ENCODE measurements at regions of chr12 and their contacts with region 1.

Region 1: DNA sequence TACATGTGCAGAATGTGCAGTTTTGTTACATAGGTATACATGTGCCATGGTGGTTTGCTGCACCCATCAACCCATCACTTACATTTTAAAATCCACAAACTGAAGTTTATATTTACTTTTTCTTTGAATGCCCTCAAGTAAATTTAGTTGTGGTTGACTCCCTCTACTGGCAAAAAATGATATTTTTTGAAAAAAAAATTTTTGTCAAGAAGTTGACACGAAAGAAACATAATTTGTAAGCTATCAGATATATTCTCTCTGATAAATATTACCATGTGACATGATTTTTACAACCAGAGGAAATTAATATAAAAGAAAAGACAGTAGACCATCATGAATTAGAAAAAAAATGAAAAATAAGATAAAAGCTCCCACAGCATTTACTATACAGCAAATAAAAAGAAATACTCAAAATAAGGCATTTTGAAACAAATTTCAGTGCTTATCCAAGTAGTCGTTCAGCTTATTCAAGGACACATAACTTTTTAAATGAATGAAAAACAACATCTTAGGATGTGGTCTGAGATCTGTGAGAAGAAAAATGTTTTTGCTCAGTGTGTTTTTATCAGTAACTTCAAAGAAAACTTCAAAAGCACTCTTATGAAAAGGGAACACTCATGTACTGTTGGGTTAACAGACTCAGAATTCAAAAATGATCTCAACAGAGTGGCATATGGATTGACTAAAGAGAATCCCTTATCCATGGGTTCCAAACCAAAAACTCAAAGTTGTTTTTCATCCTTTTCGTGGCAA is 30.0 kb upstream of the GRIP1 start:
- DNase-seq: no peak
- ATAC-seq: no peak
- H3K4me3 ChIP-seq: no peak overlapping the region
- H3K27ac ChIP-seq: no peak overlapping the region
- H3K4me1 ChIP-seq: no peaks in the 10 kb centered on the region
- H3K27me3 ChIP-seq: no peaks in the 10 kb centered on the region
- CTCF ChIP-seq: peak in 7 of 9 donors; percentile 8 to 54 (median 41)

Region 2: GRCh38 chr12:66456612-66457011 is 252.3 kb before region 1 on chr12:
- intact Hi-C with region 1: no loop called
- DNase-seq: no peak
- ATAC-seq: no peak
- H3K4me3 ChIP-seq: no peak overlapping the region
- H3K27ac ChIP-seq: no peak overlapping the region
- H3K4me1 ChIP-seq: no peaks in the 10 kb centered on the region
- H3K27me3 ChIP-seq: peaks cover 0 to 6% (median 0%) of the 10 kb centered on the region in 7 donors
- CTCF ChIP-seq: no peak

Region 3: DNA sequence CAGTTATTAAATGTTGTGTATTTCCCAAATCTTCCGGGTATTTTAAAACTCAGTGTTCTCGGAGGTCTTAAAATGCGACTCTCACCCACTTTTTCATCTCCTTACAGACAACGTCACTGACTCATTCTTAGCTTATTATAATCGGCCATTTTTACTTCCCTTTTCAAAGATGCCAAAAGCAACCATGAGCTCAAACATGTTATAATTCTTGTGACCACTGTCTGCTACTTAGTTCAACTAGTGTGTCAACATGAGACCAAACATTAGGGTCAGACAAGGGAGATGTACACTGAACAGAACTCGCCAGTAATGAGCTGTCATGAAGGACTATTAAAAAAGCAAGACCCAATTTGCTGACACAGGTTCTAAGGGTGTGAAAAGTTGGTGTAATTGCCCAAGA is 25.8 kb before region 1 on chr12:
- intact Hi-C with region 1: loop called in 1 of 10 experiments (anchors 1 kb)
- DNase-seq: no peak
- ATAC-seq: no peak
- H3K4me3 ChIP-seq: no peak overlapping the region
- H3K27ac ChIP-seq: no peak overlapping the region
- H3K4me1 ChIP-seq: peaks cover 0 to 7% (median 3%) of the 10 kb centered on the region in 9 donors
- H3K27me3 ChIP-seq: peaks cover 0 to 41% (median 16%) of the 10 kb centered on the region in 7 donors
- CTCF ChIP-seq: no peak

Measured in heart right ventricle (tissue), 16 donors.